ENCODE measurements at regions of chr16 and their contacts with region 1.

Region 1: GRCh38 chr16:67159593-67160406 is at the starts of genes FBXL8 and TRADD:
- DNase-seq: peak; percentile 87
- ATAC-seq: peak; percentile 61
- H3K4me3 Mint-ChIP-seq: peak within 1 kb of the TSS; percentile 90
- H3K27ac Mint-ChIP-seq: peak within 1 kb of the TSS; percentile 92
- H3K4me1 Mint-ChIP-seq: peaks cover 53% of the 10 kb centered on the region
- H3K27me3 Mint-ChIP-seq: peaks cover 32% of the 10 kb centered on the region
- CTCF ChIP-seq: peak; percentile 31
- total RNA-seq, gene FBXL8: 27.1 to 28.6 TPM
- total RNA-seq, gene TRADD: 28.4 to 31.2 TPM

Region 2: DNA sequence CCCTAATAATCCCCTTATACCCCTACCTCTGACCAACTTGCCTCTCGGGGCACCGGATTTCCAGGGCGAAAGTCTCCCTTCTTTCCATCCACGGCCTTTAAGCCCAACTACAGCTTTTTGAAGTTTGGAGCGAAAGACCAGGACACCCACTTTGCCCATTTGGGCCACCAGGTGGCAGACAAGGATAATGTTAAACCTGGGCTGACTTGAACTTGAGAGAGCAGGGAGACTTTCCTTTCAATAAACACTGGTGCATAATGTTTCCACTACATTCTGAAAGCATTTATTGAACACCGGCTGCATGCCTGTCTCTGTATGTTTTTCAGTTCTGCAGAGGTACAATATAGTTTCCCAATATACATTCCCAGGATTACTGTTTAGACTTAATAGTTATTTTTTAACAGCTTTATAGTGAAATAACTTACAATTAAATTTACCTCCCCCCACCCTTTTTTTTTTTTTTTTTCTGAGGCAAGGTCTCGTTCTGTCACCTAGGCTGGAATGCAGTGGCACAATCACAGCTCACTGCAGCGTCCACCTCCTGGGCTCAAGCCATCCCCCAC is 205.6 kb before region 1 on chr16:
- CTCF ChIA-PET with region 1: interaction called, 32 read pairs
- POLR2A ChIA-PET with region 1: no interaction called
- intact Hi-C with region 1: loop called (anchors 5 kb)
- DNase-seq: peak; percentile 91
- ATAC-seq: peak; percentile 87
- H3K4me3 Mint-ChIP-seq: no peak overlapping the region
- H3K27ac Mint-ChIP-seq: no peak overlapping the region
- H3K4me1 Mint-ChIP-seq: peaks cover 13% of the 10 kb centered on the region
- H3K27me3 Mint-ChIP-seq: peaks cover 31% of the 10 kb centered on the region
- CTCF ChIP-seq: peak; percentile 77

Region 3: GRCh38 chr16:66988197-66988788 is 171.5 kb before region 1 on chr16 and contains the start of gene CES4A:
- CTCF ChIA-PET with region 1: interaction called, 30 read pairs
- POLR2A ChIA-PET with region 1: interaction called, 4 read pairs
- intact Hi-C with region 1: no loop called
- DNase-seq: peak; percentile 32
- ATAC-seq: no peak
- H3K4me3 Mint-ChIP-seq: no peak within 1 kb of the TSS
- H3K27ac Mint-ChIP-seq: peak within 1 kb of the TSS; percentile 73
- H3K4me1 Mint-ChIP-seq: peaks cover 35% of the 10 kb centered on the region
- H3K27me3 Mint-ChIP-seq: no peaks in the 10 kb centered on the region
- CTCF ChIP-seq: no peak
- total RNA-seq, gene CES4A: 4.5 to 5.9 TPM

Region 4: DNA sequence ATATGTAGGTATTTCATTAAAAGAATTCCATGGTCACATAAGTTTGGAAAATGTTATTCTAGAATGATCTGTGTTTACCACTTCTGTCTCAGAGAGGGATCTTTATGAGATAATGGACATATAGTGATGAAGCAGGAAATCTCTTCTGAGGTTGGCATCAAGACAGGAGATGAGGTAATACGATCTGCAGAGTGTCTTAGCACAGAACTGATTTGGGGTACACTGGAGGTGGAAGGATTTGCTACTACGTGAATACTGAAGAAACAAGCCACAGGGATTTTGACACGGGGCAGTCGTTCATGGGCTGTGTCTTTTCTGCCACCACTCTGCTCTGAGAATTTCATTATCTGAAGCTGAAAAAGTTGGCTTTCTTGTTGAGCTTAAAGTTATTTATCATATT is 125.3 kb before region 1 on chr16:
- CTCF ChIA-PET with region 1: interaction called, 25 read pairs
- POLR2A ChIA-PET with region 1: interaction called, 4 read pairs
- intact Hi-C with region 1: loop called (anchors 5 kb)
- DNase-seq: no peak
- ATAC-seq: no peak
- H3K4me3 Mint-ChIP-seq: no peak overlapping the region
- H3K27ac Mint-ChIP-seq: peak overlapping the region; percentile 22
- H3K4me1 Mint-ChIP-seq: peaks cover 57% of the 10 kb centered on the region
- H3K27me3 Mint-ChIP-seq: no peaks in the 10 kb centered on the region
- CTCF ChIP-seq: no peak

Region 5: DNA sequence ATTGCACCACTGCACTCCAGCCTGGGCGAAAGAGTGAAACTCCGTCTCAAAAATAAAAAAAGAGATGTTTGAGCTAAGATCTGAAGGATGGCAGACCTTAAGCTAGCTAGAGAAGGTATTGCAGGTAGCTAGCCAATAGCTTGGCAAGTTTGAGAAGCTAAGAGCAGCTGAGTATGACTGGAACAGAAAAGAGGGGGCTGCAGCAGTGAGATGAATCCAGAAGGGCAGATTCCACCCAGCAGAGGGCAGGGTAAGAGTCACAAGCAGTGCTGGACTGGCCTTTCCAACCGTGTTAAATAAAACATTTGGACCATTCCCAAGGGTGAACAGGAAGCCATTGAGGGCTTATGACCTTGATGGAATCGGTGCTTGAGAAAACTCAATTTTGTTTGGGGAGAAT is 55.7 kb before region 1 on chr16:
- CTCF ChIA-PET with region 1: interaction called, 17 read pairs
- POLR2A ChIA-PET with region 1: no interaction called
- intact Hi-C with region 1: no loop called
- DNase-seq: peak; percentile 12
- ATAC-seq: peak; percentile 55
- H3K4me3 Mint-ChIP-seq: no peak overlapping the region
- H3K27ac Mint-ChIP-seq: no peak overlapping the region
- H3K4me1 Mint-ChIP-seq: no peaks in the 10 kb centered on the region
- H3K27me3 Mint-ChIP-seq: no peaks in the 10 kb centered on the region
- CTCF ChIP-seq: no peak

Region 6: DNA sequence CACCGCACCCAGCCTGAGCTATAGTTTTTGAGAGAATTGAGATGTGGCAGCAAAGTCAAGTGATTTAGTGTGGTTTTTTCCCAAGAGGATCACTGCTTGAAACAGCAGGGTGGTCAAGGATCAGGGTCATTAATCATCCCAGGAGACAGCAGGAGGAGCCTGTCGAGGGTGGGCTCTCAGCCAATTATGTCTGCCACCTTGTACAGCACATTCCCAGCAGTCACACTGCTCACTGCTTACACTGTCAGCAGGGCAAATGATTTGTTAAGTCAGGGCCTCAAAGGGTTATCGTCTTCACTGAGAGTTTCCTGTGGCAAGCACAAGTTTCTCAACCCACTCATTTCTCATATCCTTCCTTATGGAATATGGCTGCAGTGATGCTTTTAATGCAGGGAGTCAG is 22.2 kb before region 1 on chr16:
- CTCF ChIA-PET with region 1: interaction called, 40 read pairs
- POLR2A ChIA-PET with region 1: no interaction called
- intact Hi-C with region 1: no loop called
- DNase-seq: no peak
- ATAC-seq: no peak
- H3K4me3 Mint-ChIP-seq: no peak overlapping the region
- H3K27ac Mint-ChIP-seq: no peak overlapping the region
- H3K4me1 Mint-ChIP-seq: no peaks in the 10 kb centered on the region
- H3K27me3 Mint-ChIP-seq: no peaks in the 10 kb centered on the region
- CTCF ChIP-seq: no peak

Region 7: GRCh38 chr16:67284699-67285646 is 125.2 kb after region 1 on chr16:
- CTCF ChIA-PET with region 1: no interaction called
- POLR2A ChIA-PET with region 1: no interaction called
- intact Hi-C with region 1: no loop called
- DNase-seq: no peak
- ATAC-seq: no peak
- H3K4me3 Mint-ChIP-seq: no peak overlapping the region
- H3K27ac Mint-ChIP-seq: no peak overlapping the region
- H3K4me1 Mint-ChIP-seq: peaks cover 6% of the 10 kb centered on the region
- H3K27me3 Mint-ChIP-seq: no peaks in the 10 kb centered on the region
- CTCF ChIP-seq: no peak

Region 8: DNA sequence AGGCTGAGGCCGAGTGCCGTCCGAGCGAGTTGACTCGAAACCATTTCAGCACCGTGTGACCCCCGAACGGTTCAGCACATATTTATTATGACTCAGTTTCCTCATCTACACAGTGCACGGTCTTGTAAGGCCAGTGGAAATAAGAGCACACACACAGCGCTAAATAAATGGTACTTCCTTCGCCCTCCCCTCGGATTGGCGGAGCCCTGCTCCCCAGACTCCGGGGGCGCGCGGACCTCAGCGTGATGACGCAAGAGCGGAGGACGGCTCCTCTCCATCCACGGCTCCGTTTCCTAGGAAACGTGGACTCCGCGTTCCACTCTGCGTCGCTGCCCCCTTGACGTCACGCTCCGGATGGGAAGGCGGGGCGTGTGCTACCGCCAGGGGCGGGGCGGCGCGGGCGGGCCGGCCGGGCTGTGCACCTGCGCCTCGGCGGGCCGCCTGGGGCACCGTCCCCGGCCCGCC is 500.8 kb after region 1 on chr16 and contains the start of gene PARD6A:
- CTCF ChIA-PET with region 1: no interaction called
- POLR2A ChIA-PET with region 1: no interaction called
- intact Hi-C with region 1: no loop called
- DNase-seq: peak; percentile 98
- ATAC-seq: peak; percentile 82
- H3K4me3 Mint-ChIP-seq: peak within 1 kb of the TSS; percentile 90
- H3K27ac Mint-ChIP-seq: peak within 1 kb of the TSS; percentile 92
- H3K4me1 Mint-ChIP-seq: peaks cover 18% of the 10 kb centered on the region
- H3K27me3 Mint-ChIP-seq: no peaks in the 10 kb centered on the region
- CTCF ChIP-seq: no peak
- total RNA-seq, gene PARD6A: 6.3 to 7.2 TPM